IMR-90 (cell line): ENCODE measurements at regions of chr18 and their contacts with region 1.

Region 1: DNA sequence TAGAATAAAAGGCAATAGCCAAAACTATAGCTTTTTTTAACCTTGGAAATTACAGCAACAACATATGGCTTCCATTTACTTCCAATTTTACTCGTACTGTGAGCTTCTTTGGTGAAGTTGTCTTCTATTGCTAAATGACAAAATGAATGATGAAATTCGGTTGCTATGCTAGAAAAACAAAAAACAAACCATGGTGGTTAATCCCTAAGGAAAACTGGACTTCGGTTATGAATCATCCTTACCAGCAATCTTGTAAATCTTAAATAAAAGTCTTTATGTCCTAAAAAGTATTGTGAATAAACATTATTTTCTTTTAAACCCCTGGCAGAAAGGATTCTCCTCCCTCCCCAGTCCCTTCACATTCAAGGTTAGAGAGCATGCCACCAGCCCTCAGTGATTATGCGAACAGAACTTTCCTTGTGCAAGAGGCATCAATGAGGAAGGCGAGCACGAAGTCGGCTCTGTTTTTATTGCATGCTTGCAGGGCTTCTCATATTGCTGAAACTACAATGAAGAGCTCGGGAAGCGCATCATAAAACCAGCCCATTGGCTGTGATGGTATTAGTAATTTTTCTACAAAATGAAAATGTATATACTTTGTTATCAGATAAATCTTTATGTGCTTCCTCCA is 62.9 kb downstream of the ZNF521 start:
- DNase-seq: peak; percentile 91
- ATAC-seq: peak; percentile 66
- H3K4me3 ChIP-seq: no peak overlapping the region
- H3K27ac ChIP-seq: peak overlapping the region; percentile 62; the same call in 1 of the 2 replicates
- H3K4me1 ChIP-seq: peaks cover 16% of the 10 kb centered on the region
- H3K27me3 ChIP-seq: no peaks in the 10 kb centered on the region
- CTCF ChIP-seq: no peak
- POLR2A ChIP-seq: no peak
- RAD21 ChIP-seq: no peak

Region 2: GRCh38 chr18:25230658-25231326 is 58.3 kb before region 1 on chr18:
- CTCF ChIA-PET with region 1: no interaction called
- POLR2A ChIA-PET with region 1: no interaction called
- dilution Hi-C with region 1: no loop called
- in situ Hi-C with region 1: no loop called
- intact Hi-C with region 1: loop called (anchors 5 kb)
- DNase-seq: peak; percentile 90
- ATAC-seq: peak; percentile 83
- H3K4me3 ChIP-seq: peak overlapping the region; percentile 11; the same call in 1 of the 2 replicates
- H3K27ac ChIP-seq: peak overlapping the region; percentile 84
- H3K4me1 ChIP-seq: peaks cover 13% of the 10 kb centered on the region
- H3K27me3 ChIP-seq: no peaks in the 10 kb centered on the region
- CTCF ChIP-seq: no peak
- POLR2A ChIP-seq: no peak
- RAD21 ChIP-seq: peak; percentile 29

Region 3: DNA sequence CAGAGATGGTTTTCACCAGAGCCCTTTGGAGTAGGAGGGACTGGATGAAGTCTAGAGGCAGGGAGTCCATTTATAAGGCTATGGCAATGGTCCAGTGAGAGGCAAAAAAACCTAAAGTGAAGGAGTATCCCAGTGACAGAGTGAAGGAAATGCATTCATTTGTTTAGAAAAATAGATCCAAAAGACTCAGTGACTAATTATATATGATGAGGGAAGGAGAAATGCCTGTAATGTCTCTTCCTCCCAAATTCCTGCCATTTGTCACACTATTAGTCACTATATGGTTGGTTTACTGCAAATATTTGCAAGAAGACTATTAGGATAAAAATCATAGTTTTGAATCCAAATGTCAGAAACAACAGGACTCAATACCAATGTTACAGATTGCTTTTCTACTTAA is 41.4 kb before region 1 on chr18:
- CTCF ChIA-PET with region 1: no interaction called
- POLR2A ChIA-PET with region 1: no interaction called
- dilution Hi-C with region 1: no loop called
- in situ Hi-C with region 1: no loop called
- intact Hi-C with region 1: no loop called
- DNase-seq: peak; percentile 77
- ATAC-seq: peak; percentile 72
- H3K4me3 ChIP-seq: no peak overlapping the region
- H3K27ac ChIP-seq: peak overlapping the region; percentile 56
- H3K4me1 ChIP-seq: peaks cover 18% of the 10 kb centered on the region
- H3K27me3 ChIP-seq: no peaks in the 10 kb centered on the region
- CTCF ChIP-seq: no peak
- POLR2A ChIP-seq: no peak
- RAD21 ChIP-seq: no peak